Sigmoid colon (tissue), 7 donors: ENCODE measurements at regions of chr2 and their contacts with region 1.

Region 1: GRCh38 chr2:71778936-71779773 is 325.8 kb downstream of the DYSF start:
- DNase-seq: no peak
- H3K4me3 ChIP-seq: no peak overlapping the region
- H3K27ac ChIP-seq: peak overlapping the region in 1 of 4 donors; percentile 0
- H3K4me1 ChIP-seq: peaks cover 0 to 42% (median 12%) of the 10 kb centered on the region in 4 donors
- H3K27me3 ChIP-seq: no peaks in the 10 kb centered on the region
- CTCF ChIP-seq: no peak
- EP300 ChIP-seq: no peak
- POLR2A ChIP-seq: no peak

Region 2: GRCh38 chr2:71609958-71610357 is 169.2 kb before region 1 on chr2:
- intact Hi-C with region 1: loop called (anchors 10 kb)
- DNase-seq: peak; percentile 32
- H3K4me3 ChIP-seq: no peak overlapping the region
- H3K27ac ChIP-seq: no peak overlapping the region
- H3K4me1 ChIP-seq: peaks cover 0 to 13% (median 13%) of the 10 kb centered on the region in 4 donors
- H3K27me3 ChIP-seq: no peaks in the 10 kb centered on the region
- CTCF ChIP-seq: peak in 2 of 4 experiments; percentile 18 to 22
- EP300 ChIP-seq: no peak
- POLR2A ChIP-seq: no peak